ENCODE measurements at regions of chr15 and their contacts with region 1.

Region 1: DNA sequence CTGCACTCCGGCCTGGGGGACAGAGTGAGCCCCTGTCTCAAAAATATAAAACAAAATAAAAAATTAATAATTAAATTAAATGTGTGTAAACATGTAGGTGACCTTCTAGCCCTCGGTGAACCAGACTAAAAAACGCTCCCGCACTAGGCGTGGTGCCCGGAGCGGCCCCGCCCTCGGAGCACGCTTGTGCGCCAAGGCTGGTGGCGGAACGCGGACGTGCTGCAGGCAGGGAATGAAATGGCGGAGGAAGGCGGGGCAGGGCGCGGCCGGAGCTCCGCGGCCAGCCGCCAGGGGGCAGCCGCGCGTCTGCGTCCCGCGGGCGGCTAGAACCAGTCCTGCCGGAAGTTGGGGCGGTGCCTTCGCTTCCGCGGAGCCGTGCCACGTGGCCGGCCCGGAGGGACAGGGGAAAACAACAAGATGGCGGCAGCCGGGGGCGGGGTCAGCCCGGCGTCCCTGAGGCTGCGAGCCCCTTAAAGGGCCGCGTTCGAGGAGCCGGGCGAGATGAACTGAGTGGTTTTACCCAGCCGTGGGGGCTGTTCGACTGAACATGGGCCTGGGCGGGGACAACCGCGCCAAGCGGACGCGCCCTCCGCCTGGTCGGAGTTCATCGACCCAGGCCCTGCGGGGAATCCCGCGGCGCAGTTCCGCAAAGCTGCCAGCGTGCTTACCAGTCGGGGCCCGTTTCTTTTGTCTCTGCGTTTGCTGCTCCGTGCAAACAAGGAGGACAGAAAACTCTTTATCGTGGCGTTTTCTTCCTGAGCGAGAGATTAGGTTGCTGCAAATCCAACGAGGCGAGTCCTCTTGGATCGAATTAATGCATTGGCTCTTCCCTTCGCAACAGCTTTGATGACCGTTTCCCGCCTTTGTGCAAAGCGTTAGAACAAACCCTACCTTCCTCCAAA is 90.9 kb upstream of the CHD2 start:
- DNase-seq: peak; percentile 99
- H3K4me3 Mint-ChIP-seq: peak overlapping the region; percentile 91
- H3K27ac Mint-ChIP-seq: peak overlapping the region; percentile 97
- H3K4me1 Mint-ChIP-seq: peaks cover 49% of the 10 kb centered on the region
- H3K27me3 Mint-ChIP-seq: no peaks in the 10 kb centered on the region

Region 2: DNA sequence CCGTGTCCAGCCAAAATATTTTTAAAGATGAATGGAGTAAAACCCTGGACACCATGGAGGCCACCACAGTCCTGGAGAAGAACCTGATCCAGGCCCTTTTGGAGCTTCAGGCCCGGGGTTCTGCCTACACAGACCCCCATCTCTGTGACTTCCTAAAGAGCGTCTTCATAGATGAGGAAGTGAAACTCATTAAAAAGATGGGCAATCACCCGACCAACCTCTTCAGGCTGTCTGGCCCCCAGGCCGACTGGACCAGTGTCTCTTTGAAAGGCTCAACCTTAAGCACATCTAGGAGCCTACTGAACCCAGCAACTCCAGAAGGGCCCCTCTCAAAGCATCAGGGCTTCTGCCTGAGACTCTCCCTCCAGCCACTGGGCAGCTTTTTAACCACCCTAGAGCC is 45.8 kb before region 1 on chr15:
- CTCF ChIA-PET with region 1: no interaction called
- POLR2A ChIA-PET with region 1: no interaction called
- DNase-seq: no peak
- H3K4me3 Mint-ChIP-seq: no peak overlapping the region
- H3K27ac Mint-ChIP-seq: no peak overlapping the region
- H3K4me1 Mint-ChIP-seq: no peaks in the 10 kb centered on the region
- H3K27me3 Mint-ChIP-seq: peaks cover 2% of the 10 kb centered on the region

Region 3: DNA sequence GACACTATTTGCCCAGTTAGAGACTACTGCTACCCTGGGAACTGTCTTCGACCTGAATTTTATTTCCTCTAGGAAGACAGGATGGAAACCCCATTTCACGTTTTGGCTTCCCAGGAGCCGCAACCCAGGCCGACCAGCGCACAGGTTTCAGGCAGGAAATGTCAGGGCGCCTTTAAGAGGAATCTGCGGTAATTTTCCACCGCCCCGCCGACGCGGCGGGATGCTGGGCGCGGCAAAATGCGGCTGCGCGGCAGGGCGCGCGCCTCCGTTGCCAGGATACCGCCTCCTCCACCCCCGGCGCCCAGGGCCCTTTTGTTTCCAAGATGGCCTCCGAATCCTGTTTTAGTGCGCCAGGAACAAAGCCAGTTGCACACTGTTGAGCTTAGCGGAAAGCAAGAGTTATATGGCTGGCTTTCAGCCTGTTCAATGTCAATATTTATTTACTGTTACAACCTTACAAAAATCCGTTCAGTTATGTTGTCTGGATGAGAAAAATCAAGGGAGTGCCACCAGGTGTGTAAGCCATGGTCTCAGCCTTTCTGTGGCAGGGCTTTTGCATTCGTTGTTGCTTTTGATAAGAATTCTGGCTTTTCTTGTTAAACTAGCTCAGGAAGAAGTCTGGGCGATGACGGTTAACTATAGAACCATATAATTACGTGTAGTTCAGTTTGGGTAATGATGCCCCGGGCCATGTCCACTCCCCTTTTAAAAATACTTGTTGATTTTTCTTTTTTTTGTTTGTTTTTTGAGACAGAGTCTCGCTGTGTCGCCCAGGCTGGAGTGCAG is 11.2 kb after region 1 on chr15:
- CTCF ChIA-PET with region 1: interaction called, 39 read pairs
- POLR2A ChIA-PET with region 1: interaction called, 196 read pairs
- DNase-seq: peak; percentile 88
- H3K4me3 Mint-ChIP-seq: peak overlapping the region; percentile 78
- H3K27ac Mint-ChIP-seq: peak overlapping the region; percentile 93
- H3K4me1 Mint-ChIP-seq: peaks cover 66% of the 10 kb centered on the region
- H3K27me3 Mint-ChIP-seq: no peaks in the 10 kb centered on the region

Region 4: GRCh38 chr15:92839696-92840095 is 30.5 kb after region 1 on chr15:
- CTCF ChIA-PET with region 1: no interaction called
- POLR2A ChIA-PET with region 1: interaction called, 239 read pairs
- DNase-seq: no peak
- H3K4me3 Mint-ChIP-seq: no peak overlapping the region
- H3K27ac Mint-ChIP-seq: peak overlapping the region; percentile 71
- H3K4me1 Mint-ChIP-seq: peaks cover 44% of the 10 kb centered on the region
- H3K27me3 Mint-ChIP-seq: no peaks in the 10 kb centered on the region

Region 5: DNA sequence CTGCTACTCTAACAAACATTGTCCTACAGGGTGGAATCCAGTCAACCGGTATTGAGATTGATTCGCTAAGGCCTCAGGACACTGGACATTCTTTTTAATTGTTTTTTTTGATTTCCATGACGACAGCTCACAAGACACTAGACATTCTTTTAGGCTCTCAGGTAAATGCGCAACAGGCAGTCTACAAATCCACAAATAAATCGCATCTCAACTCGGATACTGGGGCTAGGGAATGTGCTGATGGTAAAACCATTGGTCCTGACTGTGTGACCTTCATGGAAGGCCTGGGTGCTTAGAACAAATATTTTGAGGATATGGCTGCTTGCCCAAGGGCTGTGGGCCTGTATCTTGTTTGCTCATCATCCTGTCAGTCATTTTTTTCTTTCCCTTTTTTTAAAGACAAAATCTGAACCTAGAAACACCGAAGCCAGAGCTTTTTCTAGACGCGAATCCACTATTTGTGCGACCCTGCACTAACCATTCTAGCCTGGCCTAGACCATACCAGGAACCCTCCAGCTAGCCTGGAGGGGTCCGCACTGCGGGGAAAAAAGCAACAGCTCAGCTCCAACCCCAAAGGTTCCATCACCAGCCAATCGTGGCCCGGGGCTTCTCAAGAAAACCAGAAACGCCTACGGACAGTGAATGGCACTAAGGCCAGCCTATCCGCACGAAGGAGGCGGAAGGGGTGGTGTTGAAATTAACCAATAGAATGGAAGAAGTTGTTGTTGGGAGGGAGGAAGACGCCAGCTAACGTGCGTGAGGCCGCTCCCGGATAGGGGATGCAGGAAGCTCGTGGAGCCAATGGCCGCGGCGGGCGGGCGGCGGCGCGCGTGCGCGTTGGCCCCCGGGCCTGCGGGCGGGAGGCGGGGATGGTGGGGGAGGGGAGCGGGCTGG is 72.8 kb after region 1 on chr15:
- CTCF ChIA-PET with region 1: interaction called, 114 read pairs
- POLR2A ChIA-PET with region 1: interaction called, 914 read pairs
- DNase-seq: peak; percentile 99
- H3K4me3 Mint-ChIP-seq: peak overlapping the region; percentile 87
- H3K27ac Mint-ChIP-seq: peak overlapping the region; percentile 91
- H3K4me1 Mint-ChIP-seq: peaks cover 38% of the 10 kb centered on the region
- H3K27me3 Mint-ChIP-seq: no peaks in the 10 kb centered on the region

Region 6: GRCh38 chr15:92896561-92896960 is 87.3 kb after region 1 on chr15:
- CTCF ChIA-PET with region 1: interaction called, 116 read pairs
- POLR2A ChIA-PET with region 1: interaction called, 678 read pairs
- DNase-seq: no peak
- H3K4me3 Mint-ChIP-seq: no peak overlapping the region
- H3K27ac Mint-ChIP-seq: no peak overlapping the region
- H3K4me1 Mint-ChIP-seq: peaks cover 69% of the 10 kb centered on the region
- H3K27me3 Mint-ChIP-seq: no peaks in the 10 kb centered on the region

Region 7: DNA sequence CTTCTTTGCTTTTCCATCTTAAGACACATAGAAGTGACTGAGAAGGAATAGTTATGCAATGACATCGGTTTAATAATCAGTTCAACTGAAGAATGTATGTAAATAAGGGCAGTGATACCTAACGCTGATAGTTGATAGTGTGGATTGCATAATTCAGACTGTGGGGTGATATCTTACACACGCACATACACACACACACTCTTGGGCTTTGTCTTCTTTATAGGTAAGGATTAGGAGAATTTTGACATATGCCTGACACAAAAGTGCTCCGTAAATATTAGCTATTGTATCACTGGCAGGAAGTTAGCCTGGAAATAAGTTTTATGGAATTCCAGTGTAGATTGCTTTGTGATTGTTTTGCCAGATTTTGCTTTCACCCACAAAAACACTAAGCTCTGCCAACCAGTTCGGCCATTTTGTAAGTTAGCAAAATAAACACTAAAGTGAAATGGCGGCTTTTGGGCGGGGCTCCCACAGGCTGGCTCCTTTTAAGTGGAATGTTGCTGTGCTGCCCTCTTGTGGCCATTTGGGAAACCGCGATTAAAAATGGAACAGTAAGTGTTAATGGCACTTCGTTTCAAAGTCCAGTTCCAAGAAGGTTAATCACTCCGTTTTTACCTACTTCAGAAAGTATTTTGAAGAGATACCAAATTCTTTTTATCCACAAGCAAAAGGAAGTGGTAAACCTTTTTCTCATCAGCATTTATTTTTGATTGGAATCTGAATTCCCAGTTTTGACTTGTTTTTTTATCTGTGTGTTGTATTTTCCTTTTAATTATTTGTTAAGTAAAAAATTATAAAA is 108.6 kb after region 1 on chr15:
- CTCF ChIA-PET with region 1: interaction called, 112 read pairs
- POLR2A ChIA-PET with region 1: interaction called, 326 read pairs
- DNase-seq: peak; percentile 95
- H3K4me3 Mint-ChIP-seq: no peak overlapping the region
- H3K27ac Mint-ChIP-seq: peak overlapping the region; percentile 44
- H3K4me1 Mint-ChIP-seq: peaks cover 88% of the 10 kb centered on the region
- H3K27me3 Mint-ChIP-seq: no peaks in the 10 kb centered on the region

Region 8: DNA sequence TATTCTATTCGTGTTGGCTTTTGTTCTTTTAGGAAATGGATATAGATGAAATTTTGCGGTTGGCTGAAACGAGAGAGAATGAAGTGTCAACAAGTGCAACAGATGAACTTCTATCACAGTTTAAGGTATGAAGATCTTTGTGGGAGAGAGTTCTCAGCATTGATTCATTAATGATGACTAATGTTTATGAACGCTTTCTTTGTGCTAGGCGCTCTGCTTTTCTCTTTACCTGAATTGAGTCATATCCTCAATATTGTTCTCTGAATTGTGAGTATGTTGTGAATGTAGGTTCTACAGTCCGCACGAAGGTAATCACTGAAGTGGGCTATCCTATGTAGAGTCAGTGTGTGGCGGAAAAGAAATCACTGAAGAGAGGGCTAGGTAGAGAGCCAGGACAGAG is 172.1 kb after region 1 on chr15:
- CTCF ChIA-PET with region 1: no interaction called
- POLR2A ChIA-PET with region 1: interaction called, 10 read pairs
- DNase-seq: no peak
- H3K4me3 Mint-ChIP-seq: no peak overlapping the region
- H3K27ac Mint-ChIP-seq: no peak overlapping the region
- H3K4me1 Mint-ChIP-seq: peaks cover 13% of the 10 kb centered on the region
- H3K27me3 Mint-ChIP-seq: no peaks in the 10 kb centered on the region